AG04449 (cell line): ENCODE measurements at regions of chr6 and their contacts with region 1.

Region 1: DNA sequence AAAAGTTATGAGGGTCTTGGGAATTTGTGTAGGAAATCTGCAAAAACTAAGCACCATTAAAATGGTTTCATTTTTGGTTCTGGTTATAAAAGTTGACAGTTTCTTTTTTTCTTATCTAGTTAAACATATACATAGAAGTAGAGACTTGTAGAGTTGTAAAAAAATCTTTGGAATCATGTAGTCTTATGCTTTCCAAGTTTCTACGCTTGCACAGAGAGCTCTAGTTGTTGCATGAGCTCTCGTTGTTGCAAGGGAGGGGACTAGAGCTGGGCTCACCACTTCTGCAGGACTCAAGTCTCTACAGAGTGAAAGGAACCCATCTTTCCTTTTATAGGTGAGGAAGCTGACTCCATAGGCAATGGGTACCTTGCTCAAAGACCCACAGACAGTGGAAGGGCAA is 21.6 kb upstream of the CCN2 start:
- DNase-seq: no peak
- H3K4me3 ChIP-seq: no peak overlapping the region
- CTCF ChIP-seq: no peak

Region 2: DNA sequence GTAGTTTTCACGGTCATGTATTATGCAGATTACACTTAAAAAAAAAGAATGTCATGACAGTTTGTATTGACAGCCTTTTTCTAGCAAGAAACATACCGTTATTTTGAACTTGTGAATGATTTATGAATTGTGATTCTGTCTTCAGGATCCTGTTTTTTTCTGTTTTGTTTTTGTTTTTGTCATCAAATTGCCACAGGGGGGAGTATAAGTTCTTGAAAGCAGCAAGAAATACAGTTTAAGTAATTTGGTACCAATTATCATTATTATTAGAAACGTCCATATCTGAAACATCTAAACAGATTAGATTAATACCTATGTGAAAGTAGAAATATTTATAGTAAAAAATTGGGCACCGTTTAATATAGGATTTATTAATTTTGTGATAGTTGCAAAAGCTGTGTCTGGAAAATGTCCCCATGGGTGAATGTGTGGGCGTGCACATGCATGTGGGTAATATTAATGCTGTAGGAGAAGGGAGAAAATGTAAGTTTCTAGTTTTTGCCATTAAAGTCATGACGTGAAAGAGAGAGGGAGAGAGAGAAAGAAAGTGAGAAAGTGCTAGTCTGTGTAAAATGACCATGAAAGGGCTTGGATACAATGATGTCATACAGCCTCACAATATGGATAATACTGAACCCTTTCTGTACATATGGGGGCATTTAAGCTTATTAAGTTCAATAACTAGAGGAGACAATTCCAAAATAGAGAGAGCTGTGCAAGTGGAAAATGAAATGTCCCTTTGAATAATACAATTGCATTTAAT is 12.2 kb before region 1 on chr6:
- CTCF ChIA-PET with region 1: interaction called, 11 read pairs
- POLR2A ChIA-PET with region 1: no interaction called
- DNase-seq: no peak
- H3K4me3 ChIP-seq: no peak overlapping the region
- CTCF ChIP-seq: no peak